Lower leg skin (tissue), 4 donors: ENCODE measurements at regions of chr17 and their contacts with region 1.

Region 1: DNA sequence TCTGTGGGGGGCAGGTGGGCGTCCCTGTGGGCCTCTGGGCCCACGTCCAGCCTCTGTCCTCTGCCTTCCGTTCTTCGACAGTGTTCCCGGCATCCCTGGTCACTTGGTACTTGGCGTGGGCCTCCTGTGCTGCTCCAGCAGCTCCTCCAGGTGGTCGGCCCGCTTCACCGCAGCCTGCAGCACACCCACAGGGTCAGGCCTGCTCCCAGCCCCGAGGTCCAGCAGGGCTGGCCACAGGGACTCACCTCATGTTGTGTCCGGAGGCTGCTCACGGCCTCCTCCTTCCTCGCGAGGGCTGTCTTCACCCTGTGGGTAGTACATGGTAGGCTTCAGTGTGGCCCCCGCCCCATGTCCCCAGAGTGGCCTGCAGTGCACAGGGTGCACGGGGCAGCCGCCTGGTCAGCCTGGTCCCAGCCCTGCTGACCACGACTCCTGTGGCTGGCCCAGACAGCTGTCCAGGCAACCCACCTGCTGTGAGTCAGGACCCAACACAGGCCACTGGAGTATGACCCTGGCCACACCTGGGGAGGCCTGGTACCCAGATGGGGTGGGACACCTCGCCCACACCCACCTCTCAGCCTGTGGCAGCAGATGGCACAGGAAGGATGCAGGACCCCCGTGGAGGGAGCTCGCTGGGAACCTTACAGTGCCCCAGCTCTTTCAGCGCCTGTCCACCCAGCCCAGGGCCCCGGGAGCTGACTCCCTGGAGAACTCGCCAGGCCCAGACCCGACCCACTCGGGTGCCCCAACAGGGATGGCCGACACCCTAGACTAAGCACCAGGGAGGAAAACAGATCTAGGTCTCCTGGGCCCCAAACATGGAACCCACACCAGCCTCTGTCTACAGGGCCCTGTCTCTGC is 23.9 kb upstream of the AATK start:
- DNase-seq: no peak
- H3K4me3 ChIP-seq: no peak overlapping the region
- CTCF ChIP-seq: no peak
- POLR2A ChIP-seq: no peak

Region 2: GRCh38 chr17:79965806-79966205 is 1224.1 kb before region 1 on chr17:
- intact Hi-C with region 1: loop called (anchors 10 kb)
- DNase-seq: peak in 1 of 2 donors; percentile 74
- H3K4me3 ChIP-seq: no peak overlapping the region
- CTCF ChIP-seq: no peak
- POLR2A ChIP-seq: no peak

Region 3: DNA sequence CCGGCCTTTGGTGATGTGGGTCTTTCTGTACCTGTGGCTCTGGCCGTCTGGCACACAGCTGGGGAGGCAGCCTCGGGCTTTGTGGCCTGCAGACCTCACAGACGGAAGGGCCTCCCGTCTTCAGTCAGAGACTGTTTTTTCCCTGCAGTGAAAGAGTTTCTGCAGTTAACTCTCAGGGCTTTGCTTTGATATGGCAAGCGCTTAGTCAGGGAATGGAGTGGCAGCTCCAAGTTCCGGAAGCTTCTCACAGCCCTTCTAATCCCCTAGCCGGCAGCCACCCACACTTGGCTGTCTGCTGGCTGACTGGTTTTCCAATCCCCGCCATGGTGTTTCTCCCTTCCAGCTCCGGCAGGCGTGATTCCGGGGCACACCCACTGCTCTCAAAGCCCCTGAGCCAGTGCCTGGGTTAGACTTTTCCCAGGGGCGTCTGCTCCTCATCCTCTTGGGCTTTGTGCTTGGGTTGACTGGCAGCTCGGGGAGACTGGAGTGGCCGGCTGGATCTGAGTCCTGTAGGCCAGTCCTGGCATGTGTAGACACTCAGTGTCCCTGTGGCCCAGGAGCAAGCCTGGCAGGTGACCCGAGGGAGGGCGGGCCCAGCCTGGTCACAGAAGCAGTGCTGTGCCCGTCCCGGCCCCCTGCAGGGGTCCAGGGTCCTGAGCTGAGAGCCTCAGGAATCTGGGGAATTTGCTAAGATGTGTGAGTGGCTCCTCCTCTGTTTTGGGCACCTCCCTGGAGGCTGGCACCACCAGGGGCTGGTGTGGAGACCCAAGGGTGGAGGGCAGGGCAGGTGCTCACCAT is 125.0 kb before region 1 on chr17:
- intact Hi-C with region 1: no loop called
- DNase-seq: no peak
- H3K4me3 ChIP-seq: no peak overlapping the region
- CTCF ChIP-seq: no peak
- POLR2A ChIP-seq: no peak